AG04449 (cell line): ENCODE measurements at regions of chrX and their contacts with region 1.

Region 1: DNA sequence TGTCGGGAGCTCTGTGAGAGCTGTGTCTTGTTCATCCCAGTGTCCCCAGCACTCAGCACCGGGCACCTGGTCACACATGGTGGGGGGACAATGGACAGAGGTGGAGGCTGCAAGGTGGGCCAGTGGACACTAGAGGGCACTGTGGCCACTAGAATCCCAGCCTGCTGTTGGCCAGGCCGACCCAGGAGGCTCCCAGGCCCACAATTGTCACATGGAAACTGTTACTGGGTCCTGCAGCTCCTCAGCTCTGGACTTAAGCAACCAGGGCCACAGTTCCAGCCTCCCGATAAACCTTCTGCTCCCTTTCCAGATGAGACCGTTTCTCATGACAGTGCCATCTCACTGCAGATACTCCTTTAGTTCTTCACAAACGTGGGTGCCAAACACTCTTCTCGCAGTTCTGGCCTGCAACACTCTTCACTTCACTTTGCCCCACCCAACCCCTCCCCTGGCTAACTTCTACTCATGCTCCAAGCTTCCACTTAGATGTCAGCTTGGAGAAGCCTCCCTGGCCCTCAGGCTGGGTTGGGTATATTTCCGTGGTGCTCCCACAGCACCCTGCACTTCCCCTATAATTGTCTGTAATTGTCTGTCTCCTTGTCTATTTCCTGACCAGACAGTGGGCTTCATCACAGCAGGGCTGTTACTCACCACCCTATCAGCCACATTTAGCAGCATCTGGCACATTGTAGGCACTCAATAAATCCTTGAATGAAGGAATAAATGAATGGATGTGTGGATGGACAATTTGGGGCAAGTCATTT is 3.5 kb upstream of the IQSEC2 start:
- DNase-seq: no peak
- H3K4me3 ChIP-seq: no peak overlapping the region
- CTCF ChIP-seq: peak; percentile 79

Region 2: DNA sequence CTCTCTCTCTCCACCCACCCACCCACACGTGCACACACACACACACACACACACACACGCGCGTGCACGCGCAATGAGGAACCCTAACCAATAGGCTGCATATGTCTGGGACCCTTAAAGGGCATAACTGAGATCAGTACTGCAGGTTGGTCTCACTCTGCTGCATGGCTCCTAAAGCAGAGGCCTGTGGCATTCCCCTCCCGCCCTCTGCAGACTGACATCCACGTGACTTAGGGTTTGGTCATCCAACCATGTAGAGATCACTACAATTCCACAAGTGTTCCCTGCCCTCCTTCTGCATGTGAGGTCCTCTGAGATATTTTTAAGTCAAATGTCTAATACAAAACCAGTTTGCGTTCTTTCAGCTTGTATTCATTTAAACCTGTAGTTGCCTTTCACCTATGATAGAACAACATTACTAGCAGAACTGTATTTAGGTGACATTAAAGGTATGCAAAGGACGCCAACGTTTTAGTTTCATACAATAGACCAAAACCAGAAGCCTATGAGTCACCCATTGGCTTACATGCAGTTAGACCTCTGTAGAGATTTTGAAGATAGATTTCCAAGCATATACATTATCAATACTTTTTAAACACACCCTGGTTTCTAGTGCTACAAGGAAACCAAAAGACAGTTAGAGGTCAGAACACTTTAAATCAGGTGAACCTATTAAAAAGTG is 463.6 kb before region 1 on chrX:
- CTCF ChIA-PET with region 1: no interaction called
- POLR2A ChIA-PET with region 1: no interaction called
- DNase-seq: no peak
- H3K4me3 ChIP-seq: no peak overlapping the region
- CTCF ChIP-seq: no peak

Region 3: DNA sequence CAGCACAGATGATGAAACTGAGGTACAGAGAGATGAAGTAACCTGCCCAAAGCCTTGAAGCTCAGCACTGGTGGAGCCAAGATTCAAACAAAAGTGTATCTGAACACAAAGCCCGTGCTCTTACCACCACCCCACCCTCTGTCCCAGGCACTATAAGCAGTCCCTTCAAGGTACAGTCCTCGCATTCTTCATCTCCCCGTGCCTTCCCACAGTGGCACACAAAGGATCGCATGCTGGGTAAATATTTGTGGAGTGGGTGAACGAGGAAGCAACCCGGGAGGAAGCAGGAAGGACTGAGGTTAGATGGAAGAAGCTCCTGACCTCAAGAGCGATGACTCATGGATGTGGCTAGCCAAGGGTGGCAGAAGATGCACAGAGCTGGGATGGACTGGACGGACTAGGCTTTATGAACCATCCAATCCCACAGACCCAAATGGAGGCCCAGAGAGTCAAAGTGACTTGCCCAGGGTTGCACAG is 21.9 kb before region 1 on chrX:
- CTCF ChIA-PET with region 1: interaction called, 10 read pairs
- POLR2A ChIA-PET with region 1: no interaction called
- DNase-seq: no peak
- H3K4me3 ChIP-seq: no peak overlapping the region
- CTCF ChIP-seq: no peak

Region 4: DNA sequence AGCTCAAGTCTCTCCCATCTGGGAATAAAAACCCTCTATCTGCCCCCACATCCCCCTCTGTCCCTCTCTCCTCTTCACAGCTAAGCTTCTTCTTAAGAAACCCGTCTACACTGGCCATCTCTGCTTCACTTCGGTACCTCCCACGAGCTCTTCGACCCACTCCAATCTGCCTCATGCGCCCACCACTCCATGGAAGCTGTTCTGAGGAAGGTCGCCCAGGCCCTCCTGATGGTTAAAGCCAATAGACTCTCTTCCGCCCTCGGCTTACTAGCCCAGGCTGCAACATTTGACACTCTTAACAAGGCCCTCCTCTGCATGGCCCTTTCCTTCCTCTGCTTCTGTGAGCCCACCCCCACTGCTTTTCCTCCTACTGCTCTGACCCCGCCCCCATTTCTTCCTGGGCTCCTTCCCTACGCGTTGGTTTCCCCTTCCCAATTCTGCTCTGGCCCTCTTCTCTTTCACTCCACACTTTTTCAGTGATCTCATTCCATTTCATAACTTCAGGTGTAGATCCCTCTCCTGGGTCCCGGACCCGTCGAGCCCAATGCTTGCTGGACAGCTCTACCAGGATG is 15.2 kb before region 1 on chrX:
- CTCF ChIA-PET with region 1: interaction called, 46 read pairs
- POLR2A ChIA-PET with region 1: no interaction called
- DNase-seq: no peak
- H3K4me3 ChIP-seq: no peak overlapping the region
- CTCF ChIP-seq: no peak

Region 5: GRCh38 chrX:53305996-53306937 is 21.4 kb after region 1 on chrX:
- CTCF ChIA-PET with region 1: interaction called, 18 read pairs
- POLR2A ChIA-PET with region 1: no interaction called
- DNase-seq: no peak
- H3K4me3 ChIP-seq: no peak overlapping the region
- CTCF ChIP-seq: no peak

Region 6: GRCh38 chrX:53330331-53330730 is 45.5 kb after region 1 on chrX:
- CTCF ChIA-PET with region 1: interaction called, 22 read pairs
- POLR2A ChIA-PET with region 1: no interaction called
- DNase-seq: no peak
- H3K4me3 ChIP-seq: no peak overlapping the region
- CTCF ChIP-seq: no peak